PC-3 (cell line): ENCODE measurements at regions of chr13 and their contacts with region 1.

Region 1: DNA sequence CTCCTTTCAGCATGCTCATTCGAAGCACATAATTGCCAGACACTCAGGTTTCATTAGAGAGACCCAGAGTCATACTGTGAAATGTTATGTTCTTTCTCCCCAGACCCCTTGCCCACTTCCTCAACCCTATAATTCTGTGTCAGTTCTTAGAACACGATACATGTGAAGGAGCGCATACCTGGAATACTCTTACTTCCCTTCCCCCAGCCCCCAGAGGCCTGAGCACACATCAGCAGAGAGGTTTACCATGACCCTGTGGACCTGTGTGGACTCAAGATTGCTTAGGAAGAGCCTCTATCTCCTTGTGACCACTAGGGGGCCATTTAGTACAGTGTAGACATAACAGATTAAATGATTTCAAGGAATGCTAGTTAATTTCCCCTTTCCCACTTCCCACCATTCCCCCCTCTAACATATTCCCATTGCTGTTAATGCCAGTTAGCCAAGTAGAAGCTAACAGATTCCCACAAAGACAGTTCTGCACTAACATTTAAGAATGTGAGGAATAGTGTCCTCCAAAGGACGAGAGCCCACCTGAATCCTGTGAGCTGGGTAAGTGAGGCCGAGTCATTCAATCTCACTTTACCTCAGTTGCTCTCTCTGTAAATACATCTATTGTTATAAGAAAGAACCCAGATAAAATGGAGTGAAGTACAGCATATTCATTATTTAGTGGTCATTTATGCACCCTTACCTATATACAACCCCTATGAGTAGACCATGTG is 154.2 kb upstream of the MAB21L1 start:
- DNase-seq: peak; percentile 71
- ATAC-seq: peak; percentile 96
- H3K4me3 ChIP-seq: no peak overlapping the region
- H3K27ac ChIP-seq: no peak overlapping the region
- H3K4me1 ChIP-seq: 0 out of 2 replicates have a peak, but pooled peaks cover 5% of the 10 kb centered on the region
- H3K27me3 ChIP-seq: no peaks in the 10 kb centered on the region
- CTCF ChIP-seq: peak; percentile 90

Region 2: GRCh38 chr13:35210261-35210660 is 420.5 kb before region 1 on chr13:
- CTCF ChIA-PET with region 1: no interaction called
- POLR2A ChIA-PET with region 1: no interaction called
- intact Hi-C with region 1: loop called (anchors 2 kb)
- DNase-seq: peak; percentile 11
- ATAC-seq: peak; percentile 43; the same call in 1 of the 2 replicates
- H3K4me3 ChIP-seq: no peak overlapping the region
- H3K27ac ChIP-seq: no peak overlapping the region
- H3K4me1 ChIP-seq: no peaks in the 10 kb centered on the region
- H3K27me3 ChIP-seq: no peaks in the 10 kb centered on the region
- CTCF ChIP-seq: peak; percentile 44

Region 3: GRCh38 chr13:35393886-35394285 is 236.8 kb before region 1 on chr13:
- CTCF ChIA-PET with region 1: no interaction called
- POLR2A ChIA-PET with region 1: no interaction called
- intact Hi-C with region 1: no loop called
- DNase-seq: no peak
- ATAC-seq: peak; percentile 78
- H3K4me3 ChIP-seq: no peak overlapping the region
- H3K27ac ChIP-seq: no peak overlapping the region
- H3K4me1 ChIP-seq: no peaks in the 10 kb centered on the region
- H3K27me3 ChIP-seq: no peaks in the 10 kb centered on the region
- CTCF ChIP-seq: no peak

Region 4: GRCh38 chr13:35720690-35721554 is 90.2 kb after region 1 on chr13:
- CTCF ChIA-PET with region 1: no interaction called
- POLR2A ChIA-PET with region 1: no interaction called
- intact Hi-C with region 1: loop called (anchors 2 kb)
- DNase-seq: peak; percentile 70
- ATAC-seq: peak; percentile 60
- H3K4me3 ChIP-seq: peak overlapping the region; percentile 58
- H3K27ac ChIP-seq: no peak overlapping the region
- H3K4me1 ChIP-seq: peaks cover 17% of the 10 kb centered on the region
- H3K27me3 ChIP-seq: no peaks in the 10 kb centered on the region
- CTCF ChIP-seq: peak; percentile 95

Region 5: GRCh38 chr13:35789335-35790165 is 158.8 kb after region 1 on chr13:
- CTCF ChIA-PET with region 1: no interaction called
- POLR2A ChIA-PET with region 1: no interaction called
- intact Hi-C with region 1: loop called (anchors 10 kb)
- DNase-seq: peak; percentile 52
- ATAC-seq: peak; percentile 67
- H3K4me3 ChIP-seq: no peak overlapping the region
- H3K27ac ChIP-seq: no peak overlapping the region
- H3K4me1 ChIP-seq: 0 out of 2 replicates have a peak, but pooled peaks cover 14% of the 10 kb centered on the region
- H3K27me3 ChIP-seq: no peaks in the 10 kb centered on the region
- CTCF ChIP-seq: peak; percentile 60